Activated naive CD4-positive, alpha-beta T cell treated with anti-CD3 and anti-CD28 coated beads, Interleukin-2, amount 10 ng/mL, durations not matched to agents 7 days and 5 days (primary cell): ENCODE measurements at regions of chr15 and their contacts with region 1.

Region 1: DNA sequence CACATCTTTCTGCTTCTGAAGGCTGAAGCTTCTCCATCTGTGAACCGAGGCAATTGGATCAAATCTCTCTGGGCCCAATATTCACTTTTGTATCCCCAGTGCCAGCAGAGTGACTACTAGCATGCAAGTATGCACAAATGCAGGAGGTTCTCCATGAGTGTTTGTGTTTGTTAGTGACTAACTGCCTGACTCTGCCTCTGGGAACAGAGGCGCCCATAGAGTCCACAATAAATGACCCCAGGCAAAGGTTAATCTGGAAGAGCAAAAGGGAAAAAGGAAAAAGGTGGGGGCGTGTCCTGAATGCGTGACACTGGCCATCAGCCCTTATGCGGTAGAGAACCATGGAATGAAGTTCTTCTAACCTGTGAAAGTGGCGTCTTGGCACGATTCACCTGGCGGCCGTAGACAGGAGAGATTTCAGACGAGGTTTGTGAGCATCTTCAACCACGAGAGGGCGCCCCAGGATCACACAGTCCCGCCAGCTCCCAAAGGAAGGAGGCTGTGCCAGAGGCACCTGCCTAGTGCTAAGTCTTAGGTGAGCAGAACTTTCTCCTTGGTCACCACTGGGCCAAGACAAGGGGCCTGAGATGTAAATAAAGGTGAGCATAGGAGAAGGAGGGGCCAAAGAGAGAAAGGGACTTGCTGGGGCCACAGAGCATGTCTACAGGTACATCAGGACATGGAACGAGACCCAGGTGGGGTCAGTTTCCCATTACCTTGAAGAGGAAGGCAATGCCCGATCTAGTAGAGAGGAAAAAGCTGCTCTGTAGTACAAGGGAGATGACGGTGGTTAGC is 44.2 kb downstream of the RBPMS2 start:
- DNase-seq: peak; percentile 92
- H3K4me3 Mint-ChIP-seq: no peak overlapping the region
- H3K27ac Mint-ChIP-seq: no peak overlapping the region
- H3K4me1 Mint-ChIP-seq: peaks cover 9% of the 10 kb centered on the region
- H3K27me3 Mint-ChIP-seq: peaks cover 30% of the 10 kb centered on the region

Region 2: GRCh38 chr15:64426845-64427465 is 304.3 kb before region 1 on chr15:
- CTCF ChIA-PET with region 1: interaction called, 25 read pairs
- DNase-seq: no peak
- H3K4me3 Mint-ChIP-seq: no peak overlapping the region
- H3K27ac Mint-ChIP-seq: peak overlapping the region; percentile 17
- H3K4me1 Mint-ChIP-seq: peaks cover 49% of the 10 kb centered on the region
- H3K27me3 Mint-ChIP-seq: no peaks in the 10 kb centered on the region

Region 3: GRCh38 chr15:64542091-64542490 is 189.1 kb before region 1 on chr15:
- CTCF ChIA-PET with region 1: no interaction called
- DNase-seq: no peak
- H3K4me3 Mint-ChIP-seq: no peak overlapping the region
- H3K27ac Mint-ChIP-seq: no peak overlapping the region
- H3K4me1 Mint-ChIP-seq: peaks cover 2% of the 10 kb centered on the region
- H3K27me3 Mint-ChIP-seq: no peaks in the 10 kb centered on the region

Region 4: DNA sequence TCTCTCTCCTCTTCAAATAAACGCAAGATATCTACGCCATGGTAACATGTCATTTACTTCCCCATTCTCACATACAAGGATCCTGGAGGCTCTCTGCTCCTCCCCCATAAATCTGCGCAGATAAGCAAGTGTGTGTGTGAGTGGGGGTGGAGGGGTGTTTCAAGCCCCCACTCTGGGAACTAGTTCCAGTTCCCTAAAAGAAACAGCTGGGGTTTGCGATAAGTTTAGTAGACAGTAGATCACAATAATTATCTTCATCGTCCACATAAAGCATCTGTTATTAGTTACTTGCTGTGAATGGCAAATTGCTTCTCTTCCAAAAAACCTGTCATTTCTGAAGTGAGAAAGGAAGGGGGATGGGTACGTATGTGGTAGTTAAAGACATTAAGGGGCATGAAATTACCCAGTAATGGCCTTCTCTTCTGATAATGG is 35.6 kb before region 1 on chr15:
- CTCF ChIA-PET with region 1: interaction called, 24 read pairs
- DNase-seq: no peak
- H3K4me3 Mint-ChIP-seq: no peak overlapping the region
- H3K27ac Mint-ChIP-seq: no peak overlapping the region
- H3K4me1 Mint-ChIP-seq: peaks cover 29% of the 10 kb centered on the region
- H3K27me3 Mint-ChIP-seq: no peaks in the 10 kb centered on the region

Region 5: GRCh38 chr15:64760056-64760455 is 28.8 kb after region 1 on chr15:
- CTCF ChIA-PET with region 1: no interaction called
- DNase-seq: no peak
- H3K4me3 Mint-ChIP-seq: no peak overlapping the region
- H3K27ac Mint-ChIP-seq: no peak overlapping the region
- H3K4me1 Mint-ChIP-seq: no peaks in the 10 kb centered on the region
- H3K27me3 Mint-ChIP-seq: peaks cover 38% of the 10 kb centered on the region

Region 6: GRCh38 chr15:64809649-64810496 is 78.7 kb after region 1 on chr15:
- CTCF ChIA-PET with region 1: interaction called, 55 read pairs
- DNase-seq: peak; percentile 83
- H3K4me3 Mint-ChIP-seq: no peak overlapping the region
- H3K27ac Mint-ChIP-seq: no peak overlapping the region
- H3K4me1 Mint-ChIP-seq: no peaks in the 10 kb centered on the region
- H3K27me3 Mint-ChIP-seq: peaks cover 51% of the 10 kb centered on the region

Region 7: DNA sequence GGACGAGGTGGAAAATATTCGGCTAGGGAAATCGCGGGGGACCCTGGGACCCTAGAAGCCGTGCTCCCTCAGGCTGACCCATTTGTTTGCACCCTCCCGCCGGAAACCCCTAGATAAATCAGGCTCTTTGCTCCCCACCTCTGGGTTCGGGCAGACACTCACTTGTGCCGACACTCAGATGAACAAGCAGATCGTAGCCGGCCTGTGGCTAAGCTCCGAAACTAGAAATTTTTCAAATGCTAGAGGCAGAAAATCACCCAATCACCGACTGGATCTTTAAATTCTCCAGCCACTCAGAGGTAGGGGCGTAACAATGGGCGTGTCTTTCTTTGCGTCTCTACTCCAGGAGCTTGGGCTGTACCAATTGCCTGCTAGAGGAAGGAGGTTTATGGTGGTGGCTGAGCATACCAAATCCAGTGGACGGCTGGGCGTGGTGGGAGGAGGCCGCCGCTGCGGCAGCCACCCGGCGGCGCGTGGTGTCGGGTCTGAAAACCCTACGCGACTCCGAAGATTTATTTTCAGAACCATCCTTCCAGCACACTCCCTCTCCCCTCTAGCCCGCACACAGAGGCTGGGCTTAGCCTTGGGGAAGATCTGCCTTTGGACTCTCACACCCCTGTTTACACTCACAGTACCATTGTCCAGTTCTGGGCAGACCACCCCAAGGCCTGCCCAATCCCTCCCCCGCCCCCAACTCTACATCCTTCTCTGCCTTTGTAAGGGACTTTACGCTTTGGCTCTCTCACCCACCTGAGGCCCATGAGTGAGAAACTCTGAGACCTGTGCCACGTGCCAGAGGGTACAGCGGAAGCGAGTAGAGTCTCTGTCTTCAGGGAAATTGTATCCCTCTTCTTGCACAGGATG is 94.5 kb after region 1 on chr15 and contains the start of gene PIF1:
- CTCF ChIA-PET with region 1: no interaction called
- DNase-seq: peak; percentile 96
- H3K4me3 Mint-ChIP-seq: peak within 1 kb of the TSS; percentile 88
- H3K27ac Mint-ChIP-seq: peak within 1 kb of the TSS; percentile 92
- H3K4me1 Mint-ChIP-seq: peaks cover 45% of the 10 kb centered on the region
- H3K27me3 Mint-ChIP-seq: no peaks in the 10 kb centered on the region